PC-9 (cell line): ENCODE measurements at regions of chr20 and their contacts with region 1.

Region 1: GRCh38 chr20:24051160-24051559 is 62.6 kb upstream of the GGTLC1 start:
- DNase-seq: no peak
- H3K4me3 ChIP-seq: no peak overlapping the region
- H3K27ac ChIP-seq: no peak overlapping the region
- H3K4me1 ChIP-seq: no peaks in the 10 kb centered on the region
- H3K27me3 ChIP-seq: no peaks in the 10 kb centered on the region
- CTCF ChIP-seq: no peak

Region 2: GRCh38 chr20:25565578-25566157 is 1514.5 kb after region 1 on chr20:
- CTCF ChIA-PET with region 1: no interaction called
- POLR2A ChIA-PET with region 1: interaction called, 24 read pairs
- intact Hi-C with region 1: no loop called
- DNase-seq: no peak
- H3K4me3 ChIP-seq: no peak overlapping the region
- H3K27ac ChIP-seq: no peak overlapping the region
- H3K4me1 ChIP-seq: no peaks in the 10 kb centered on the region
- H3K27me3 ChIP-seq: no peaks in the 10 kb centered on the region
- CTCF ChIP-seq: no peak